Dorsolateral prefrontal cortex (tissue), 120 donors: ENCODE measurements at regions of chr3 and their contacts with region 1.

Region 1: GRCh38 chr3:133040696-133041523 is 2.7 kb downstream of the TMEM108 start:
- DNase-seq: peak; percentile 47 to 87 (median 83)
- H3K4me3 ChIP-seq: peak overlapping the region in 57 of 59 donors; percentile 2 to 96 (median 84)
- H3K27ac ChIP-seq: peak overlapping the region in 55 of 59 donors; percentile 1 to 86 (median 62)
- H3K27me3 ChIP-seq: no peaks in the 10 kb centered on the region
- CTCF ChIP-seq: peak; percentile 63 to 94 (median 84)

Region 2: DNA sequence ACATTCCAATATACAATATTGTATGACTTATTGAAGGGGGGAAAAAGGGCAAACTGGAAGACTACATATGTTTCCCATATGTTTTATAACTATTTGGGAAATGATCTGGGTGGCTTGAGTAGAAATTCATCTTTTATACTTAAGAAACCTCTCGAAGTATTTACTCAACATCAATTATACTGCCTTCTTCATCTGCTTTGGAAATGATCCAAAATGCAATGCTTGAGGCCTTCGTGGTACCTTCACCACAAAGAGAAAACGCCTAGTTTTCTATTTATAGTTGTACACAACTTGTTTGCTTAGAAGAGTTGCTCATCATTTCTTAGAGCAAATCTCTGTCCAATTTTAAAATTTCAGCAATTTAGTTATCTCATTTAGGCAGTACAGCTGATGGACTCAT is 425.0 kb before region 1 on chr3:
- intact Hi-C with region 1: no loop called
- DNase-seq: no peak
- H3K4me3 ChIP-seq: no peak overlapping the region
- H3K27ac ChIP-seq: no peak overlapping the region
- H3K27me3 ChIP-seq: no peaks in the 10 kb centered on the region
- CTCF ChIP-seq: no peak

Region 3: DNA sequence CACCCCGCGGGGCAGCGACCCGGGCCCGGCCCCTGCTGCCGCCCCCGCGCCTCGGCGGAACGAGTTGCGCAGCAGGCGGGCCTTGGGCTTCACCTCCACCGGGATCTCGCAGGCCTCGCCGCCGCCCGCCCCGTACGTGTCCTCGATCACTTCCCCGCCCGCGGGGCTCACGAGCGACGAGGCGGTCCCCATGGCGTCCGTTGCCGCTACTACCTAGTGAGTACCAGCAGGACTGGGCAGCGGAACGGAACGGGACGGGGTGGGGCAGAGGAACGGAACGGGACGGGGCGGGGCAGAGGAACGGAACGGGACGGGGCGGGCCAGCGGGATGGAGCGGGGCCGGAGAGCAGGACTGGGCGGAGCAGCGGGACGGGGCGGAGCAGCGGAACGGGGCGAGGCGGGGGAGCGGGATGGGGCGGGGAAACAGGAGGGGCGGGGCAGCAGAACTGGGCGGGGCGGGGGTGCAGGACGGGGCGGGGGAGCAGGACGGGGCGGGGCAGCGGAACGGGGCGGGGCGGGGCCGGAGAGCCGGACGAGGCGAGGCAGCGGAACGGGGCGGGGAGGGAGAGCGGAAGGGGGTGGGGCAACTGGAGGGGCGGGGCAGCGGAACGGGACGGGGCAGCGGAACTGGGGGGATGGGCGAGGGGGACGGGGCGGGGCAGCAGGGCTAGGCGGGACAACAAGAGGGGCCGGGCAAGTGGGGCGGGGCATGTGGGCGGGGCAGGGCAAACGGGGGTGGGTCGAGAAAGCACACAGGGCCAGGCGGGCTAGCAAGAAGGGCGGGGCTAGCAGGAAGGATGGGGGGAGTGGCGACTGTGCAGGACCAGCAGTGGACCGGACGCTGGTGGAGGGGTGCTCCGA is 318.5 kb before region 1 on chr3 and contains the start of gene NPHP3:
- intact Hi-C with region 1: loop called (anchors 5 kb)
- DNase-seq: peak; percentile 91 to 99 (median 94)
- H3K4me3 ChIP-seq: peak within 1 kb of the TSS; percentile 76 to 97 (median 89)
- H3K27ac ChIP-seq: peak within 1 kb of the TSS; percentile 62 to 96 (median 90)
- H3K27me3 ChIP-seq: no peaks in the 10 kb centered on the region
- CTCF ChIP-seq: peak in 3 of 56 donors; percentile 3 to 13 (median 8)
- total RNA-seq, gene NPHP3: 12.0 to 55.8 (median 23.8) TPM

Region 4: GRCh38 chr3:132730891-132731580 is 309.9 kb before region 1 on chr3:
- intact Hi-C with region 1: loop called (anchors 2 to 5 kb)
- DNase-seq: no peak
- H3K4me3 ChIP-seq: no peak overlapping the region
- H3K27ac ChIP-seq: no peak overlapping the region
- H3K27me3 ChIP-seq: no peaks in the 10 kb centered on the region
- CTCF ChIP-seq: peak; percentile 5 to 79 (median 59)

Region 5: GRCh38 chr3:132843851-132844553 is 196.9 kb before region 1 on chr3:
- intact Hi-C with region 1: loop called in 1 of 2 experiments (anchors 10 kb)
- DNase-seq: peak in 3 of 10 donors; percentile 8 to 44 (median 14)
- H3K4me3 ChIP-seq: no peak overlapping the region
- H3K27ac ChIP-seq: no peak overlapping the region
- H3K27me3 ChIP-seq: no peaks in the 10 kb centered on the region
- CTCF ChIP-seq: no peak

Region 6: DNA sequence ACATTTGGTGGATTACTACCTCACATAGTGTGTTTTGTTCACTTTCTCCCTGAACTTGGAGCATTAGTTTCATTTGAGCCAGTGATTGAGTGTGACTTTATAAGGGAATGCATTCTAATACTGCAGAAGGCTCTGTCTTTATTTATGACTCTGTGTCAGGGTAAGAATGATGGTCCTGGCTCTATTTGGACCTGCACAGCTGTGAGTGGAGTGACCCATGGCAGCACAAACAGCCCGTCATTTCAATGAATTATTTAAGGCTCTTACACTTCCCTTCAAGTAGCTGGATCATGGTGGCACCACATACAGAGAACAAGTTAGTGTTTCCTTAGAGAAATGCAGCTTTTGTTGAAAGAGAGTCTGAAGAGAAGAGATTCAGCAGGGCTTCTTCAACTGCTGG is 13.7 kb after region 1 on chr3:
- intact Hi-C with region 1: no loop called
- DNase-seq: no peak
- H3K4me3 ChIP-seq: no peak overlapping the region
- H3K27ac ChIP-seq: no peak overlapping the region
- H3K27me3 ChIP-seq: no peaks in the 10 kb centered on the region
- CTCF ChIP-seq: no peak

Region 7: DNA sequence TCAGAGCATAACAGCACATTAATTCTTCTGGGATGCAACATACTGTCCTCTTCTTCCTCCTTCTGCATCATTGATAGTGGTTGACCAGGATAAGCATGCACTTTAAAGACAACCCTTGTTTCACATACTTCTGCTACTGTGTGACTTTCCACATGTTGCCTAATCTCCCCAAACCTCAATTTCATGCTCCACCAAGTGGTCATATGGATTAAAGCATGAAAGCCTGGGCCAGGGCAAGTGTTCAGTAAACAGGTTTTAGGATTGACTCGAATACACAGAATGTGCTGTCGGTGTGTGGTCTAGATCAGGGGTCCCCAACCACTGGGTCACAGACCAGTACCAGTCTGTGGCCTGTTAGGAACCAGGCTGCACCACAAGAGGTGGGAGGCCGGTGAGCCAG is 336.5 kb after region 1 on chr3:
- intact Hi-C with region 1: loop called in 1 of 2 experiments (anchors 2 kb)
- DNase-seq: peak in 1 of 10 donors; percentile 39
- H3K4me3 ChIP-seq: no peak overlapping the region
- H3K27ac ChIP-seq: peak overlapping the region in 5 of 59 donors; percentile 9 to 51 (median 32)
- H3K27me3 ChIP-seq: no peaks in the 10 kb centered on the region
- CTCF ChIP-seq: peak; percentile 28 to 64 (median 52)

Region 8: DNA sequence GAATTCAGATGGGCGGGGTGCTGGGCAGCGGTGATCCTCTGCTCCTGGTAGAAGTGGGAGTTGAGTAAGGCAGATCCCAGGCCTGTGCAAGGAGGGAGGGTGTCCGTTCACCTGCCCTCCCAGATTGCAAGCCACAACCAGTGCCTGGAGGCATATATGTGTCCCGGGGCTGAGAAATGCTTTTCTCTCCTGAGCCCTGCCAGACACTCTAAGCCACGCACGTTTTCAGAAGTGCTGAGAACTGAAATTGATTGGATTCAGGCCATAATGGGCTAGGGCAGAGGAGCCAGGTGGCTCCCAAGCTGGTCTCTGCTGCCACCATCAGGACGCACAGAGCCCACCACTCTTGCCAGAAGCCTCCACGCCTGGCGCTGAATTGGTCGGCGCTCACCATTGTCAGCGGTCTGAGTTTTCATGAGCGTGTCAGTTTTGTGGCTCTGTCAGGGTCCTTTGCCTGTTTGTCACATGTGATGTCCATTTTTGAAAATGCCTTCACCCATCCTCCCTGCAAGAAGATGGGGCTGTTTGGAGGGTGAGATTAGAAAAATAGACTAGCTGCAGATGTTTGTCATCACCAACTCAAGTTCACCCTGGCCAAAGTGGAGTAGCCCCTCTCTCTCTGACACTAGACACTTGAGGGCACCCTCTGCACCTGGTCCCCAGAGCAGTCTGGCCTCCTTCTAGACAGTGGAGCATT is 343.6 kb after region 1 on chr3:
- intact Hi-C with region 1: loop called in 1 of 2 experiments (anchors 1 kb)
- DNase-seq: peak; percentile 62 to 81 (median 74)
- H3K4me3 ChIP-seq: peak overlapping the region in 26 of 59 donors; percentile 3 to 47 (median 24)
- H3K27ac ChIP-seq: peak overlapping the region in 22 of 59 donors; percentile 1 to 88 (median 38)
- H3K27me3 ChIP-seq: no peaks in the 10 kb centered on the region
- CTCF ChIP-seq: peak; percentile 27 to 94 (median 84)

Region 9: GRCh38 chr3:133426721-133427120 is 385.8 kb after region 1 on chr3:
- intact Hi-C with region 1: loop called (anchors 1 kb)
- DNase-seq: no peak
- H3K4me3 ChIP-seq: no peak overlapping the region
- H3K27ac ChIP-seq: peak overlapping the region in 1 of 59 donors; percentile 2
- H3K27me3 ChIP-seq: no peaks in the 10 kb centered on the region
- CTCF ChIP-seq: no peak